ENCODE measurements at regions of chr4 and their contacts with region 1.

Region 1: GRCh38 chr4:41214136-41214824 is at the start of gene APBB2:
- DNase-seq: peak; percentile 87
- H3K4me3 ChIP-seq: peak within 1 kb of the TSS; percentile 90
- H3K27ac ChIP-seq: peak within 1 kb of the TSS; percentile 69
- H3K4me1 ChIP-seq: peaks cover 40% of the 10 kb centered on the region
- CTCF ChIP-seq: peak; percentile 79
- total RNA-seq, gene APBB2: 47.4 and 66.4 TPM in 2 replicates

Region 2: GRCh38 chr4:40193016-40193571 is 1021.2 kb before region 1 on chr4:
- CTCF ChIA-PET with region 1: no interaction called
- POLR2A ChIA-PET with region 1: no interaction called
- intact Hi-C with region 1: loop called (anchors 5 kb)
- DNase-seq: peak; percentile 84
- H3K4me3 ChIP-seq: peak overlapping the region; percentile 79
- H3K27ac ChIP-seq: peak overlapping the region; percentile 93
- H3K4me1 ChIP-seq: peaks cover 76% of the 10 kb centered on the region
- CTCF ChIP-seq: peak; percentile 37; the same call in 1 of the 2 replicates

Region 3: DNA sequence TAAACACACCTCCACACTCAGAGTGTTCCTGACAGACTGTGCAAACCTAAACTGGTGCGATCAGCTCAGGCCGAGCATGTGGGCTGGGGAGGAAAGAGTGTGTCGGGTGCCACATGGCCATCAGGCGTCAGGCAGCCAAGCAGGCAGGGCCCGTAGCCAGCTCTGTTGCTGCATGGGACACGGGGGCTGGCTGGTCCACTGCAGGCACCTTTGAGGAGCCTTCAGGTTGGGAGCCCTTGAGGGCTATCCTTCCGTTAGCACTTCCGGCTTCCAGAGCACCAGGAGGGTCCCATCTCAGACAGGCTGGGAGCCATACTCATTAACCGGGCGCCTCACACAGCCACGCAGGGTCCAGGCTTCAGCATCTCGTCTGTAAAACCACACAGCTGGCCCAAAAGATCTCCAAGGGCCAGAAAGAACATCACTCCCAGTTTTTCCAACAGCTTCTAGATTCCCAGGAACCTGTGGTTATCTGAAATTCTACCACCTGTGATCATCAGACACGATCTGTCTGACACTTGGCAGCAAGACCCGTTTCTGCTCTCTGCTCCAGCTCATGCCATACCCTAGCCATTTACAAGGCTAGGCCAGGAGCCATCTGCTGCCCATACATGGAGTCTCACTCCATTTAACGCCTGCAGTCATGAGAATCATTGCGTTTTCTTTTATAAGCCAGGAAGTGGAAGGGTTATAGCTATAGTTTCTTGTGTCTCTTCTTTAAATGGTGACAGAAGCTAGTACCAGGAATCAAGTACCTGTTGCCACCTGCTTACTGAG is 377.0 kb before region 1 on chr4:
- CTCF ChIA-PET with region 1: no interaction called
- POLR2A ChIA-PET with region 1: no interaction called
- intact Hi-C with region 1: no loop called
- DNase-seq: no peak
- H3K4me3 ChIP-seq: no peak overlapping the region
- H3K27ac ChIP-seq: no peak overlapping the region
- H3K4me1 ChIP-seq: peaks cover 12% of the 10 kb centered on the region
- CTCF ChIP-seq: no peak

Region 4: DNA sequence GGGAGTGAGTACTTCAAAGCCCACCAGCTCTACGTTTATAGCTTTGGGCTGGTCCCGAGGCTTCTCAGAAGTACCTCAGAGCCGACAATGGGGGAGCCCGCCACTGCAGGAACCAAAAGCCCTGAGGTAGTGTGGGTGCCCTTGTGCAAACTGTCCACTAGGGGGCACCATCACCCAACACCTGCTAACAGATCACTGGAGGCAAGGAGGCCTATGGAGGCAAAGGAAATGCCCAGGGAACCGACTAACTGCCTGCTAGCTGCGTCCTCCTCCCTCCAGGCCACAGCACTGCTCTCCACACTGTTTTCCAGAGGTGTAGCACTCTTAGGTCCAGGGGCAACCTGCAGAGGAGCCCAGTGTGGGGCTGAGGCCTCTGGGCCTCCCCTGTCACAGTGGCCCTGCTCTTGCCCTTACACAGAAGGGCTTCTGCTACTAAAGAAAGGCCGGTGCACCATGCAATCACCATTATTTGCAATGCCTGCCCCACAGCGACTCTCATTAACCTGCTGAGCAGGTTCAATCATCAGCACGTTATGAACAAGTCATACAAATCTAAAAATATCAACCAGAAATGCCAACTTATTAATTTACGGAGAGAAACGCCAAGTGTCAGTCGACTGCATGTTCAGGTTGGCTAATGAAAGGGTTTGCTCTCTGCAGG is 305.4 kb before region 1 on chr4:
- CTCF ChIA-PET with region 1: no interaction called
- POLR2A ChIA-PET with region 1: interaction called, 3 read pairs
- intact Hi-C with region 1: loop called (anchors 1 kb)
- DNase-seq: peak; percentile 86
- H3K4me3 ChIP-seq: no peak overlapping the region
- H3K27ac ChIP-seq: no peak overlapping the region
- H3K4me1 ChIP-seq: peaks cover 5% of the 10 kb centered on the region
- CTCF ChIP-seq: peak; percentile 95

Region 5: GRCh38 chr4:40924096-40924792 is 290.0 kb before region 1 on chr4:
- CTCF ChIA-PET with region 1: interaction called, 3 read pairs
- POLR2A ChIA-PET with region 1: interaction called, 5 read pairs
- intact Hi-C with region 1: loop called (anchors 1 kb)
- DNase-seq: peak; percentile 74
- H3K4me3 ChIP-seq: no peak overlapping the region
- H3K27ac ChIP-seq: no peak overlapping the region
- H3K4me1 ChIP-seq: no peaks in the 10 kb centered on the region
- CTCF ChIP-seq: peak; percentile 94

Region 6: GRCh38 chr4:40976343-40976742 is 237.9 kb before region 1 on chr4:
- CTCF ChIA-PET with region 1: interaction called, 3 read pairs
- POLR2A ChIA-PET with region 1: interaction called, 9 read pairs
- intact Hi-C with region 1: loop called (anchors 1 kb)
- DNase-seq: peak; percentile 75
- H3K4me3 ChIP-seq: no peak overlapping the region
- H3K27ac ChIP-seq: no peak overlapping the region
- H3K4me1 ChIP-seq: peaks cover 35% of the 10 kb centered on the region
- CTCF ChIP-seq: peak; percentile 96

Region 7: DNA sequence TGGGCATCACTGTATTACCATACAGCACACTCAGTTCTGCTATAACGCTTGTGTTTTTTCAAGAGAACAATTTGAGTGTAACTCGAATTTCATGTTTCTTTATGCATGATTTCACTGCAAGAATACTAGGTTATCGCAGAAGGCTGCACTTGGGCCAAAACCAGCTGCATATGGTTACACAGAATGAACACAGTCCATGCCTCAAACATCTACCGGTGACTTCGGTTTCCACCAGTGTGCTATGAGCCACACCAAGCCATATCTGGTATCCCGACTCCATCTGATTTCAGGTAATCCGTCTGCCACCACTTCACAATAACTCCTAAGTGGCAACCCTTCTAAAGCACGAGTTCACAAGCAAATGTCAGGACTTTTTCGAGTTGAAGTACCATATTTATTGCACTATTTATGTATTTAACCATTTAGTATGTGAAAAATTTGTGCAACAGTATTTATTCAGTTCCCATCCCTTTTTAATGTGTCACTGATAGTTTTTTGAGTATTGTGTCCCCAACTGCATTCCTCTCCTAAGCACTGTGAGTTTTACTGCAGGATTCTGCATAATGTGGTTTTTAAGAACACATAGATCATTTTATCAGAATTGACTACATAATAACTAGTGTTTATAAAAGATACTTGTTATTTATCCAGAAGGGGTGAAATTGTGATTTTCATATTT is 111.7 kb before region 1 on chr4:
- CTCF ChIA-PET with region 1: no interaction called
- POLR2A ChIA-PET with region 1: no interaction called
- intact Hi-C with region 1: loop called (anchors 10 kb)
- DNase-seq: peak; percentile 64
- H3K4me3 ChIP-seq: no peak overlapping the region
- H3K27ac ChIP-seq: peak overlapping the region; percentile 33
- H3K4me1 ChIP-seq: peaks cover 28% of the 10 kb centered on the region
- CTCF ChIP-seq: no peak

Region 8: DNA sequence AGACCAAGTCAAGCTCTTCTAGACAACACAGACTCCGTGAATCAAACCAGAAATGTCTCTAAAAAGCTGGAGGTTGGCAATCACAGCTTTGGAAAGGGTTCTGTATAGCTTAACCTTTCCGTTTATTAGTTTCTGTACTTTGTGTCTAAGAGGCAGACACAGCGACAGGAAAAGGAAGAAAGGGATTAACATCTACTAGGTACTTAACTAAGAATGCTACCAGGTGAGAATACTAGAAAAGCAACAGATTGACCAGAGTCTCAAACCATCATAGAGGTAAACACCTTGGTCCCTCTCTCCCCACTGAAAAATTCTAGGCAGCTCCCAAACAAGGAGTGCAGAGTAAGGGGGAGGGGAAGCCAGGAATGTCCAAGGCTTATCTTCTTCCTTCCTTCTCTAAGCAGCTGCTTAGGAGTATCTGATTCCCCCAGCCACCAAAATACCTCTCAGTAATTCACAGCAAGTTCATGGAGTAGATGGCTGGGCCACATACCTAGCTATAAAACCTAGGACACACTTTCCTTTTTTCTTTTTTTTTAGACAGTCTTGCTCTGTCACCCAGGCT is 80.7 kb before region 1 on chr4:
- CTCF ChIA-PET with region 1: no interaction called
- POLR2A ChIA-PET with region 1: interaction called, 4 read pairs
- intact Hi-C with region 1: loop called (anchors 5 kb)
- DNase-seq: peak; percentile 45
- H3K4me3 ChIP-seq: peak overlapping the region; percentile 31
- H3K27ac ChIP-seq: peak overlapping the region; percentile 35
- H3K4me1 ChIP-seq: peaks cover 32% of the 10 kb centered on the region
- CTCF ChIP-seq: no peak

Region 9: GRCh38 chr4:41569961-41570360 is 355.7 kb after region 1 on chr4:
- CTCF ChIA-PET with region 1: no interaction called
- POLR2A ChIA-PET with region 1: no interaction called
- intact Hi-C with region 1: no loop called
- DNase-seq: no peak
- H3K4me3 ChIP-seq: no peak overlapping the region
- H3K27ac ChIP-seq: no peak overlapping the region
- H3K4me1 ChIP-seq: no peaks in the 10 kb centered on the region
- CTCF ChIP-seq: no peak

Region 10: DNA sequence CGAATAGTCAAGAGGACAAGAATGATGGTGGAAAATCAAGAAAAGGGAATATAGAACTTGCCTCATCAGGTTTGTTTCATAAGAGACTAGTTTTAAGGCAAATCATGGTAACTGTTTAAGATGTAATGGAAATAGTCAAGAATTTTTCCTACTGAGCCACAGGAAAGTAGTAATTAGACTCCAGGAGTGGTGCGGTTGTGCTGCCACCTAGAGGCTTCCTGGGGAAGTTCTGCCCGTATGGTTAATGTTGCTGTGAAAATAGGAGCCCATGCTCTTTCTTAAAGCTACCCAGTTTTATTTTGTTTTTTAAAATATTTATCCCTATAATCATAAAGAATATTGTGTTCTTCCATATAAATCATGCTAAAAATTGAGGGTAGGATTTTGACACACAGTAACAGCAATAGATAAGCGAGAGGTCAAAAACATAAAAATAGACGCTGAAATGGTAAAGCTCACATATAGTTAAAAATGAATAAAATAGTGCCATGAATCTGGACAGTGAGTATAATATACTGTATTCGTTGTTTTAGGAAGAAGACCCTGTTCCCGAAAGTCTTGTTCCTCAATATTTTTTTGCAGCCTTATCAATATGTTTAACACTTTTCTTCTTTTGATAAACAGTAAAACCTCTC is 447.3 kb after region 1 on chr4:
- CTCF ChIA-PET with region 1: no interaction called
- POLR2A ChIA-PET with region 1: no interaction called
- intact Hi-C with region 1: no loop called
- DNase-seq: peak; percentile 46
- H3K4me3 ChIP-seq: no peak overlapping the region
- H3K27ac ChIP-seq: no peak overlapping the region
- H3K4me1 ChIP-seq: no peaks in the 10 kb centered on the region
- CTCF ChIP-seq: peak; percentile 99